AG04449 (cell line): ENCODE measurements at regions of chr3 and their contacts with region 1.

Region 1: GRCh38 chr3:78659386-78659987 is 1108.3 kb downstream of the ROBO1 start:
- DNase-seq: no peak
- H3K4me3 ChIP-seq: no peak overlapping the region
- CTCF ChIP-seq: no peak

Region 2: DNA sequence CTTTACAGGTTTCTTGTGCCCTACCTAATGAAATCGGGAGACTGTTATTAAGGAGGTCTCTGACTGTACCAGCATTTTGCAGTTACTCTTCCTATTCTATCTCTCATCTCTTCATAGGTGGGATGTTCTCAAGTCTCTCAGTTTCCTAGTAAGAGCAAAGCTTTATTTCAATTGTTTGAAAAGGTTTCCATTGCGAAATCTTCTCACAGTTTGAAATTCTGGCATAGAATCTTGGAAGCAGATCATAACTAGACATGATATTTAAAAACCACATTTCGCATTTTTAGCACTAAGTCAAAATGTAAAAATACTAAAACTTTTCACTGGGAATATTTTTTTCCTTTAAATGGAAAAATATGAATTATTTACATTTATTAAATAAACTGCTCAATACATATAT is 308.2 kb before region 1 on chr3:
- CTCF ChIA-PET with region 1: no interaction called
- POLR2A ChIA-PET with region 1: no interaction called
- DNase-seq: no peak
- H3K4me3 ChIP-seq: no peak overlapping the region
- CTCF ChIP-seq: no peak

Region 3: DNA sequence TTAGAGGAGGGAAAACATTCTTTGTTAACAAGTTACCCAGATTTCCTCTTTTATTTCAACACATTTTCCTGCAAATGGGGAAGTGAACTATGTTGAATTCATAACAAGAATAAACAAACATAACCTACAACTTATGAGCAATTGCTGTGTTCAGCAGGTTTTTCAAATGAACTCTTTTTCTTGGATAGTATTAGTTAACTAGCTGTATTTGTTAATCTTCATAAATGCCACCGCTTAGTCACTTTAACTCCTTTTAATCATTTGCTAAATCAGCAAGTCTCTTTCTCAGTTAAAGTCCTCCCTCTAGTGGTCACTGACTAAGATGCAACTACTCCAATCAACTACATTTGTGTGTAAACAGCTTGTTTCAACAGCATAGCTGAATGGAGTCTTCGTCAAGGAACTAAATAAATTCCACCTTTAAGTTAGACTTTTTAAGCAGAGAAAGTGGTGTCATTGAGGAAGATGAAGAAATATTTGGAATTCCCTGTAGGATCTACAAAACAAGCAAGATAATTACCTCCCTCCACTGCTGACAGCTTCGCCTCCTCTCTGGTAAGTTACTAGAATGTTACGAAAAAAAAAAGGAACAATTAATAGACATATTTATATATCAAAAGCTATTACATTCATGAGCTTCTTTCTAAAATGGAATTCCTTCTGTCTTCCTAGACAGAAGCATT is 13.7 kb before region 1 on chr3:
- CTCF ChIA-PET with region 1: interaction called, 24 read pairs
- POLR2A ChIA-PET with region 1: no interaction called
- DNase-seq: peak; percentile 33
- H3K4me3 ChIP-seq: no peak overlapping the region
- CTCF ChIP-seq: peak; percentile 59

Region 4: GRCh38 chr3:78978037-78978436 is 318.6 kb after region 1 on chr3:
- CTCF ChIA-PET with region 1: interaction called, 31 read pairs
- POLR2A ChIA-PET with region 1: no interaction called
- DNase-seq: no peak
- H3K4me3 ChIP-seq: no peak overlapping the region
- CTCF ChIP-seq: peak; percentile 40

Region 5: DNA sequence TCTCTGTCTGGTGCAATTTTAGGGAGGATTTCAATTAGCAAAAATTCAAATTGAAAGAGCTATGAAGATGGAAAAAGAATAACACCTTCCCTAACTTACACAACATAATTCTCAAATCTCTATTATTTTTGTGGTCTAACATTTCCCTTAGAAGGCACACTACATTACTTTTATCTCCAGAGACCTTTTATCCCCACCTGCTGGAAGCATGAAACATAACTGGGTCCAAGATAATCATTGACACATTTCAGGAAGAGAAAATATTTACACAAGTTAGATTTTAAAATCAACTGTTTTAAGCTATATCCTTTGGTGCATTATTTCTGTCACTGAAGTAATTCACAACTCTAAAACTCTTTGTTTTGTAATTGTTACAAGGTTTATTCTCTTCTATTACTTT is 328.8 kb after region 1 on chr3:
- CTCF ChIA-PET with region 1: interaction called, 20 read pairs
- POLR2A ChIA-PET with region 1: no interaction called
- DNase-seq: no peak
- H3K4me3 ChIP-seq: no peak overlapping the region
- CTCF ChIP-seq: peak; percentile 20

Region 6: DNA sequence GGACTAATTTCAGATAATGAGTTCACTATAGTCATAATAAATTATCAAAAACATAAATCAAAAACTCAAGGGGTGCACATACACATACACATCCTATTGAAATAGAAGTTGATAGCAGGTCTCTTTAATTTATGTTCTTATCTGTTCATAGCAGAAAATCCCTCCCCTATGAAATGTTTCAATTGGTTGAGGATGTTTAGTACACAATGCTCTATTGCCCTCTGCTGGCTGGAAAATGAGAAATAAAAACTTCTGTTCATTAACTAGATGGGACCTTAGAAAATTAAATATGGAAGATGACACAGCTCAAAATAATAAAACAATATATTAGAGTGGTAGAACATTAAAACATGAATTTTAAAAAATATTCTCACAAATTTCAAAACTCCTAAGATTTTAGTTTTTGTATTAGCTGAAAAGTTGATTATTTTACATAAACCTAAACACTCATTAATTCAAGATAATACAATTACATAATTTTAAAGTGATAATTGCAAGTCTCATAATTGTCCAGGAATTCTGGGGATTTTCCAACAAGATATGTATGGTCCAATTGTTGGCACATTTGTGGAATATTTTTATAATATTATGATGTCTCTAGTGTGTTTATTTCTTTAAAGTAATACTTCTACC is 373.3 kb after region 1 on chr3:
- CTCF ChIA-PET with region 1: interaction called, 91 read pairs
- POLR2A ChIA-PET with region 1: no interaction called
- DNase-seq: no peak
- H3K4me3 ChIP-seq: no peak overlapping the region
- CTCF ChIP-seq: peak; percentile 40